Activated T-helper 1 cell treated with anti-CD3 and anti-CD28 coated beads, Interleukin-12 subunit alpha, Interleukin-12 subunit beta, Interleukin-2, Interleukin-4 antibody, amounts not matched to agents 30 ng/mL and 10 ng/mL and 1 ng/mL, durations not matched to agents 14 hours and 24 hours and 36 hours (primary cell): ENCODE measurements at regions of chrX and their contacts with region 1.

Region 1: DNA sequence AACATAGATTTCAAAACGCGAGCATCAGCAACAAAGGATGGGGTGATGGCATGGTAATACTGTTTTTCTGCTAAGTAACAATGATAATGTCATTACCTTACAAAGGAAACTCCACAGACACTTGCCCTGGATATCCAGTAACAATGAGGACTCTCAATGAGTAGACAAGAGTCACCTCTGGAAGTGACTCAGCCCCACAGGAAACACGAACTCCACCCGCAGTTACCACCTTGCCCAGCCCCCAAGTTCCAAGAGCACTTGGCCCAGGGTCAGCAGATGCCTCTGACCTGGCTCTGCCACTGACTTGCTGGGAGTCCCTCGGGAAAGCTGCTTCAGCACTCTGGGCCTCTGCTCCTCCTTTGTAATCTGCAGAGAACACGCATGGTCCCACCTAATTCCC is 110.3 kb upstream of the MAP3K15 start:
- DNase-seq: peak; percentile 42
- H3K4me3 Mint-ChIP-seq: peak overlapping the region; percentile 70
- H3K27ac Mint-ChIP-seq: peak overlapping the region; percentile 95
- H3K4me1 Mint-ChIP-seq: peaks cover 60% of the 10 kb centered on the region
- H3K27me3 Mint-ChIP-seq: peaks cover 3% of the 10 kb centered on the region

Region 2: DNA sequence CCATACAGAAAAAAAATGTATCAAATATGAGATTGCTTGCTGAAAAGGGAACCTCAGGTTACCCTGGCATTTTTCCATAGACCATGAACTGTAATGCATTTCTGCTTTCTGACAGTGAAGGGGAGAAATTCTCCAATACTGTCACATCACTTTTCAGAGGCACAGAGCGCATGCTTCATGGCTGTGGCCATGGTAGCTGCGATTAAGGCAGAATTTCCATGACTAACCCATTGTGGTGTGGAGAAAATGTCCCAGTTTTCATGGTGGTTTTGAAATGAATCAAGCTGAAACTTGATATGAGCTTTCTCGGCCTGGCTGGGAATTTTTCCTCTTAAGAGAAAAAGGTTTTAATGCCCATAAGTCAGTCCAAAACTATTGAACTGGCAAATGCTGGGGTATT is 70.8 kb before region 1 on chrX:
- intact Hi-C with region 1: loop called (anchors 1 kb)
- DNase-seq: no peak
- H3K4me3 Mint-ChIP-seq: peak overlapping the region; percentile 12
- H3K27ac Mint-ChIP-seq: peak overlapping the region; percentile 58
- H3K4me1 Mint-ChIP-seq: peaks cover 47% of the 10 kb centered on the region
- H3K27me3 Mint-ChIP-seq: no peaks in the 10 kb centered on the region

Region 3: DNA sequence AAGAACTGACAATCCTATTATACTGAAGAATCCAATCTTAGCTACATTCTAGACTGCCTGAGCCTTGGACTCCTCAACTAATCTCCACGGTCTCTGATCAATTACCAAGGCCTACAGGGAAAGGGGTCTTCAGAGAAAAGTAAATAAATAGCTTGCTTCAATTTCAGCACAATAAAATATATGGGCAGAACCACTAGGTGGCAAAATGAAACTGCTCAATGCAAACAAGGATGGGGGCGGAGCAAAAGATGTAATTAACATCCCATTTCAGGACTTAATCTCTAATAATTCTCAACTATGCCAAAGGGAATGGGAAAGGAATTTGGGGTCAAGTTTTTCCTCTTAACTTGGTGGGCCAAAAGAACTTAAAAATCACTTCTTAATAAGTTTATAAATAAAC is 31.9 kb before region 1 on chrX:
- intact Hi-C with region 1: loop called (anchors 5 kb)
- DNase-seq: no peak
- H3K4me3 Mint-ChIP-seq: no peak overlapping the region
- H3K27ac Mint-ChIP-seq: no peak overlapping the region
- H3K4me1 Mint-ChIP-seq: peaks cover 5% of the 10 kb centered on the region
- H3K27me3 Mint-ChIP-seq: no peaks in the 10 kb centered on the region

Region 4: GRCh38 chrX:19642241-19643109 is 16.9 kb after region 1 on chrX:
- intact Hi-C with region 1: loop called (anchors 1 kb)
- DNase-seq: no peak
- H3K4me3 Mint-ChIP-seq: peak overlapping the region; percentile 37
- H3K27ac Mint-ChIP-seq: peak overlapping the region; percentile 68
- H3K4me1 Mint-ChIP-seq: peaks cover 31% of the 10 kb centered on the region
- H3K27me3 Mint-ChIP-seq: no peaks in the 10 kb centered on the region

Region 5: DNA sequence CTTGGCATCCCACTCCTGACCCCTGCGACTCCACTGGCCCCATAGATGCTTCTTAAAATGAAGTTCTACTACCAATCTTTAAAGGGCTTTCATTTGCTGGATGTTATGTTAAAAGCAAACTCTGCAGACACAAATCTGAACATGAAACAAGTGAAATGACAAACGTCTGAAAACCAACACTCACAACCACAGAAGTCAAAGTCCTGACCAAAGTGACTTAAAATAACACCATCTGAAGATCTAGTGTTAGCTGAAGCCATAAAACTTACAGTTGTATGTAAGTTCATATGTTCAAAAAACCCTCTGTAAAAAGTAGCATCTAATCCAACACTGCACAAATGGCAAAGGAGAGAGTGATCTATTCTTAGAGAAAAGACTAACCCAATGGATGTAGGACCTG is 83.1 kb after region 1 on chrX:
- intact Hi-C with region 1: loop called (anchors 1 kb)
- DNase-seq: no peak
- H3K4me3 Mint-ChIP-seq: no peak overlapping the region
- H3K27ac Mint-ChIP-seq: no peak overlapping the region
- H3K4me1 Mint-ChIP-seq: peaks cover 33% of the 10 kb centered on the region
- H3K27me3 Mint-ChIP-seq: no peaks in the 10 kb centered on the region

Region 6: DNA sequence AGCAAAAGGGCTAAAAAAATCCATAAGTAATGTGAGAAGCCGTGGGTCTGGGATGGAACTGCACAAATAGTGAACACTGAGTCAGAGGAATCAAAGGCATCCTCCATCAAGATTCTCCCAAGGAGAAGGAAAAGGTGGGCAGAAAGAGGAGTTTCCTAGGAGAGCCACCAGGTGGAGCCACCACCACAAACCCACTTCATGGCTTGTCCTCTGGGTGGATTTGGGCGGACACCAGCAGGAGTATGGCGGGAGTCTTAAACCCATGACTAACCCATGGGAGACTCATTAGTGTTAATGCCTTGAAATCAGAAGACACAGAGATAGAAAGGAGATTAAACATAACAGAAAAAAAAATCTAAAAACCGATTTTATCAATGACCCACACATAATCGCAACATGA is 114.1 kb after region 1 on chrX:
- intact Hi-C with region 1: loop called (anchors 10 kb)
- DNase-seq: no peak
- H3K4me3 Mint-ChIP-seq: no peak overlapping the region
- H3K27ac Mint-ChIP-seq: peak overlapping the region; percentile 83
- H3K4me1 Mint-ChIP-seq: peaks cover 54% of the 10 kb centered on the region
- H3K27me3 Mint-ChIP-seq: no peaks in the 10 kb centered on the region

Region 7: GRCh38 chrX:19799319-19800182 is 173.9 kb after region 1 on chrX:
- intact Hi-C with region 1: loop called (anchors 5 kb)
- DNase-seq: peak; percentile 27
- H3K4me3 Mint-ChIP-seq: peak overlapping the region; percentile 88
- H3K27ac Mint-ChIP-seq: peak overlapping the region; percentile 95
- H3K4me1 Mint-ChIP-seq: peaks cover 77% of the 10 kb centered on the region
- H3K27me3 Mint-ChIP-seq: no peaks in the 10 kb centered on the region